Naive thymus-derived CD4-positive, alpha-beta T cell (primary cell): ENCODE measurements at regions of chr12 and their contacts with region 1.

Region 1: DNA sequence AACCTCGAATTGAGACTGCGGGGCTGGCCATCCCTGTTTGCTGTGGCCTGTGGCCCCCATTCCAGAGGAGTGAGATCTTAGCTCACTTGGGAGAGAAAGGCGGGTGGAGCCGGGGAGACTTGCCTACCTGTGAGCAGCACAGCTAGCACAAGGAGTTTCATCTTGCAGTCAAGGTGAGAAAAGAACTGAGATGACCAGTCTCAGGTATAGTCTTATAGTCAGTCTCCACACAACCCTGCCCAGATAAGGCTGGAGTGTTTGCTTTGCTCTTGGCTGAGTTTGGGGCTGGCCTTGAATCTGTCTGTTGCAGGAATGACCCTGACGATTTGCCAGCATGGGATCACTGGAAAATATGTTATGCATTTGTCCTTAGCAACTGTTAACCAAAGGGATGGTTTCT is at the start of gene PLA2G1B:
- DNase-seq: no peak
- ATAC-seq: no peak
- H3K4me3 ChIP-seq: no peak within 1 kb of the TSS
- H3K4me3 Mint-ChIP-seq: peak within 1 kb of the TSS in 1 of 10 donors; percentile 25
- H3K27ac ChIP-seq: no peak within 1 kb of the TSS
- H3K27ac Mint-ChIP-seq: no peak within 1 kb of the TSS
- H3K4me1 ChIP-seq: no peaks in the 10 kb centered on the region
- H3K4me1 Mint-ChIP-seq: peaks cover 0 to 10% (median 2%) of the 10 kb centered on the region in 7 donors
- H3K27me3 ChIP-seq: no peaks in the 10 kb centered on the region
- H3K27me3 Mint-ChIP-seq: peaks cover 0 to 18% (median 0%) of the 10 kb centered on the region in 5 donors
- total RNA-seq, gene PLA2G1B: 1.5 TPM in 1 of 5 experiments, not detected in the others

Region 2: GRCh38 chr12:120317224-120318105 is 10.1 kb before region 1 on chr12:
- CTCF ChIA-PET with region 1: interaction called, 3 read pairs
- POLR2A ChIA-PET with region 1: interaction called, 7 read pairs
- intact Hi-C with region 1: loop called (anchors 1 kb)
- DNase-seq: peak; percentile 100
- ATAC-seq: peak; percentile 100
- H3K4me3 ChIP-seq: peak overlapping the region; percentile 81
- H3K4me3 Mint-ChIP-seq: peak overlapping the region; percentile 86 to 95 (median 93)
- H3K27ac ChIP-seq: peak overlapping the region; percentile 87
- H3K27ac Mint-ChIP-seq: peak overlapping the region; percentile 85 to 99 (median 98)
- H3K4me1 ChIP-seq: peaks cover 5 to 10% of the 10 kb centered on the region in 2 donors
- H3K4me1 Mint-ChIP-seq: peaks cover 4 to 16% (median 14%) of the 10 kb centered on the region in 7 donors
- H3K27me3 ChIP-seq: no peaks in the 10 kb centered on the region
- H3K27me3 Mint-ChIP-seq: peaks cover 0 to 4% (median 0%) of the 10 kb centered on the region in 5 donors

Region 3: GRCh38 chr12:120367924-120368788 is 40.6 kb after region 1 on chr12:
- CTCF ChIA-PET with region 1: no interaction called
- POLR2A ChIA-PET with region 1: interaction called, 5 read pairs
- intact Hi-C with region 1: loop called in 1 of 2 experiments (anchors 1 kb)
- DNase-seq: peak in 1 of 9 donors; percentile 44
- ATAC-seq: no peak
- H3K4me3 ChIP-seq: no peak overlapping the region
- H3K4me3 Mint-ChIP-seq: peak overlapping the region; percentile 22 to 84 (median 58)
- H3K27ac ChIP-seq: no peak overlapping the region
- H3K27ac Mint-ChIP-seq: no peak overlapping the region
- H3K4me1 ChIP-seq: peaks cover 0 to 5% of the 10 kb centered on the region in 2 donors
- H3K4me1 Mint-ChIP-seq: peaks cover 10 to 22% (median 13%) of the 10 kb centered on the region in 7 donors
- H3K27me3 ChIP-seq: peaks cover 8 to 29% of the 10 kb centered on the region in 2 donors
- H3K27me3 Mint-ChIP-seq: peaks cover 73 to 84% (median 80%) of the 10 kb centered on the region in 5 donors

Region 4: DNA sequence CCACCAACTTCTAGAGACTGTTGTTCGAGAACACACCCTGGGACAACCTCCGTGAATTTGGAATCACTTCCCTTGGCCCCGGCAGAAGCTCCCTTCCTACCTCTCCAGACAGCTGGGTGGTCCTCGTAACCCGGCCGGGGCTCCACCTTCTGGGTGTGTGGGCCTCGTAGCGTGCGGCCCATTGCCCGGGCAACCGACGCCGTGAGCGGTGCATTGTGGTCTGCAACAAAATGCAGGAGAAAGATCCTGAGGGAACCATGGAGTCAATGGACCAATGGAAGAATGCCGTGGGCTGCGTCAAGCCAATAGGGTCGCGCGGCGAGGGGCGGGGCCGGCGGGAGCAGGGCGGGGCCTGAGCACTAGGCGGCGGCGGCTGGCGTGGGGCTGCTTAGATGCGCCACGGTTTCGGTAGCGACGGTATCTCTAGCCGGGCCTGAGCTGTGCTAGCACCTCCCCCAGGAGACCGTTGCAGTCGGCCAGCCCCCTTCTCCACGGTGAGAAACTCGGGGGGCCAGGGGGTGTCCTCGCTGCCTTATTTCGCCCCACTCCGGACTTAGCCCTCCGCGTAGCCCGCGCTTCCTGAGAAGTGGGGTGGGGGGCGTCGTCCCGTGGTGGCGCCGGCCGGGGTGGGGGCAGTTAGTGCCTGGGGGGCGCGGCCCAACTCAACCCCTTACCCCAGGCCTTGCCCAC is 168.3 kb after region 1 on chr12 and contains the start of gene DYNLL1:
- CTCF ChIA-PET with region 1: interaction called, 4 read pairs
- POLR2A ChIA-PET with region 1: no interaction called
- intact Hi-C with region 1: loop called in 1 of 2 experiments (anchors 1 kb)
- DNase-seq: peak; percentile 95 to 99 (median 97)
- ATAC-seq: peak; percentile 99
- H3K4me3 ChIP-seq: peak within 1 kb of the TSS; percentile 82
- H3K4me3 Mint-ChIP-seq: peak within 1 kb of the TSS; percentile 83 to 98 (median 94)
- H3K27ac ChIP-seq: peak within 1 kb of the TSS; percentile 84
- H3K27ac Mint-ChIP-seq: peak within 1 kb of the TSS; percentile 58 to 94 (median 90)
- H3K4me1 ChIP-seq: peaks cover 9% of the 10 kb centered on the region in 2 donors
- H3K4me1 Mint-ChIP-seq: peaks cover 13 to 48% (median 33%) of the 10 kb centered on the region in 7 donors
- H3K27me3 ChIP-seq: no peaks in the 10 kb centered on the region
- H3K27me3 Mint-ChIP-seq: no peaks in the 10 kb centered on the region
- total RNA-seq, gene DYNLL1: 35.0 to 301 (median 72.7) TPM

Region 5: DNA sequence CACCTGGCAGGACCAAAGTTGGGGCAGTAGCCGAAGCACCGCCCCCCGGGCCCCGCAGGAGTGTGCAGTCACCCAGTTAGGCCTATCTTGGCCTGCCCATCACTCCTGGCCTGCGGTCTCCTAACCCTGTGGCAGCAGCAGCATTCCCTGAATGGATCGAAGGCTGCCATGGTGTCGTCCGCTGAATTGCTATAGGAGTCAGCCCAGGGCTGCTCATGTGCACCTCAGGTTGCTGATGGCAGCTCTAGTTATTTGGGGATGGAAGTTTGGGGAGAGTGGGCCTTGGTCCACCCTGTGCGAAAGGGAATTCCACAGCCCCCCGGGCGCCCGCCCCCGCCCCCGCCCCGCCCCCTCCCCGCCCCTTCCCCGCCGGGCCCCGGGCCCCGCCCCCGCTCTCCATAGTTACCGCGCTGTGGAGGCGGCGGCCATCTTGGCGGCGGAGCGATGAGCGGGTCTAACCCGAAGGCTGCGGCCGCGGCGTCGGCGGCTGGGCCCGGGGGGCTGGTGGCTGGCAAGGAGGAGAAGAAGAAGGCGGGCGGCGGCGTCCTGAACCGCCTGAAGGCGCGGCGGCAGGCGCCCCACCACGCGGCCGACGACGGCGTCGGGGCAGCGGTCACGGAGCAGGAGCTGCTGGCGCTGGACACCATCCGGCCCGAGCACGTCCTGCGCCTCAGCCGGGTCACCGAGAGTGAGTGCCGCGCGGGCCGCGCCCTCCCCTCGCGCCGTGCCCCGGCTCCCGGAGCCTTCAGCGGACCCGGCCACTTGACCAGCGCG is 382.6 kb after region 1 on chr12 and contains the start of gene UNC119B:
- CTCF ChIA-PET with region 1: no interaction called
- POLR2A ChIA-PET with region 1: no interaction called
- intact Hi-C with region 1: loop called in 1 of 2 experiments (anchors 2 kb)
- DNase-seq: peak; percentile 53 to 82 (median 69)
- ATAC-seq: peak; percentile 92
- H3K4me3 ChIP-seq: peak within 1 kb of the TSS; percentile 69
- H3K4me3 Mint-ChIP-seq: peak within 1 kb of the TSS; percentile 87 to 98 (median 95)
- H3K27ac ChIP-seq: peak within 1 kb of the TSS; percentile 83
- H3K27ac Mint-ChIP-seq: peak within 1 kb of the TSS; percentile 87 to 96 (median 92)
- H3K4me1 ChIP-seq: peaks cover 5 to 7% of the 10 kb centered on the region in 2 donors
- H3K4me1 Mint-ChIP-seq: peaks cover 20 to 40% (median 37%) of the 10 kb centered on the region in 7 donors
- H3K27me3 ChIP-seq: no peaks in the 10 kb centered on the region
- H3K27me3 Mint-ChIP-seq: no peaks in the 10 kb centered on the region
- total RNA-seq, gene UNC119B: 10.9 to 26.7 (median 18.8) TPM